Heart left ventricle (tissue), 16 donors: ENCODE measurements at regions of chr17 and their contacts with region 1.

Region 1: DNA sequence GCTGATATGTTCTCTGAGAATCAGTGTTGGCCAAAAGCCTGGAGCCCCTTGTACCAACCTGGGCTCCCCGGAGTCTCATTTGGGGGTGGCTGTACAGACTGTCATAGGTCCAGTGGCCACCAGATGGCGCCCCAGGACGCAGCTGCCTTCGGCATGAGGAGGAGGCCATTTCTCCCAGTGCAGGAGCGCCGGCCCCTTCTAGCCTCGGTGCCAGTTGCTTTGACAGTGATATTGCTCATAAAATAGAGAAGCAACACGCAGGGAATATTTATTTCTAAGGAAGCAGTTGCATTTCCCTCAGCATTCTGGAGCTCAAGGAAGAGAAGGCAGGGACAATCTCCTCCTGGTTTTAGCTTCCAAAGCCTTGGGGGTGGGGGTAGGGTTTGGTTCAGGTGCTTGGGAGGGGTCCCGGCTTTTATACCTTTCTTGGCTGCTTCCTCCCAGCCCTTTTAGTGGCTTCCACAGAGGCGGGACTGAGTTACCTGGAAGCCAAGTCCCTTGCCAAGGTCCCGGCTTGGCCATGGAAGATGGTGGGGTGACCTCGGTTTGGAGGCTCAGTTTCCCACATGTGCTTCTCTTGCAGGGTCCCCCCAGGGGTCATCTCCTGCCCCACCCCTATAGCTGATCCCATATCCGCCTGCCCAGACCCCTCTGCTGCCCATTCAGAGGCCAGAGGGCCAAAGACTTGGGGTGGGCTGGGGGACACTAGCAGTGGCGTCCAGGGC is 117.8 kb upstream of the CDC42EP4 start:
- DNase-seq: peak; percentile 82 to 93 (median 89)
- ATAC-seq: peak; percentile 79 to 94 (median 92)
- H3K4me3 ChIP-seq: no peak overlapping the region
- H3K27ac ChIP-seq: no peak overlapping the region
- H3K4me1 ChIP-seq: peaks cover 0 to 19% (median 4%) of the 10 kb centered on the region in 12 donors
- H3K27me3 ChIP-seq: no peaks in the 10 kb centered on the region
- CTCF ChIP-seq: peak; percentile 92 to 99 (median 97)
- POLR2A ChIP-seq: no peak

Region 2: GRCh38 chr17:73478768-73479424 is 49.3 kb after region 1 on chr17:
- intact Hi-C with region 1: loop called in 2 of 10 experiments (anchors 5 to 10 kb)
- DNase-seq: no peak
- ATAC-seq: no peak
- H3K4me3 ChIP-seq: no peak overlapping the region
- H3K27ac ChIP-seq: no peak overlapping the region
- H3K4me1 ChIP-seq: peaks cover 2 to 37% (median 11%) of the 10 kb centered on the region in 12 donors
- H3K27me3 ChIP-seq: peaks cover 0 to 7% (median 0%) of the 10 kb centered on the region in 9 donors
- CTCF ChIP-seq: no peak
- POLR2A ChIP-seq: no peak

Region 3: GRCh38 chr17:73532421-73532901 is 102.9 kb after region 1 on chr17:
- intact Hi-C with region 1: loop called in 4 of 10 experiments (anchors 2 to 10 kb)
- DNase-seq: peak in 1 of 5 donors; percentile 50
- ATAC-seq: peak in 2 of 4 donors; percentile 11 to 32
- H3K4me3 ChIP-seq: no peak overlapping the region
- H3K27ac ChIP-seq: no peak overlapping the region
- H3K4me1 ChIP-seq: peaks cover 0 to 8% (median 0%) of the 10 kb centered on the region in 12 donors
- H3K27me3 ChIP-seq: no peaks in the 10 kb centered on the region
- CTCF ChIP-seq: no peak
- POLR2A ChIP-seq: no peak

Region 4: GRCh38 chr17:73645050-73645978 is 215.7 kb after region 1 on chr17:
- intact Hi-C with region 1: loop called in 9 of 10 experiments (anchors 1 to 10 kb)
- DNase-seq: peak; percentile 61 to 72 (median 65)
- ATAC-seq: peak; percentile 41 to 87 (median 77)
- H3K4me3 ChIP-seq: peak overlapping the region in 11 of 12 donors; percentile 20 to 68 (median 57)
- H3K27ac ChIP-seq: peak overlapping the region in 4 of 12 donors; percentile 20 to 50 (median 47)
- H3K4me1 ChIP-seq: peaks cover 0 to 30% (median 15%) of the 10 kb centered on the region in 12 donors
- H3K27me3 ChIP-seq: peaks cover 0 to 68% (median 13%) of the 10 kb centered on the region in 9 donors
- CTCF ChIP-seq: peak in 4 of 12 donors; percentile 7 to 35 (median 18)
- POLR2A ChIP-seq: no peak

Region 5: GRCh38 chr17:73841431-73842060 is 411.9 kb after region 1 on chr17:
- intact Hi-C with region 1: loop called in 5 of 10 experiments (anchors 5 to 10 kb)
- DNase-seq: no peak
- ATAC-seq: peak in 3 of 4 donors; percentile 56 to 66 (median 66)
- H3K4me3 ChIP-seq: no peak overlapping the region
- H3K27ac ChIP-seq: no peak overlapping the region
- H3K4me1 ChIP-seq: no peaks in the 10 kb centered on the region
- H3K27me3 ChIP-seq: peaks cover 0 to 12% (median 0%) of the 10 kb centered on the region in 9 donors
- CTCF ChIP-seq: peak; percentile 31 to 68 (median 54)
- POLR2A ChIP-seq: no peak

Region 6: GRCh38 chr17:73956669-73957465 is 527.3 kb after region 1 on chr17:
- intact Hi-C with region 1: loop called in 5 of 10 experiments (anchors 5 to 10 kb)
- DNase-seq: peak in 2 of 5 donors; percentile 20 to 37
- ATAC-seq: peak in 3 of 4 donors; percentile 37 to 57 (median 42)
- H3K4me3 ChIP-seq: no peak overlapping the region
- H3K27ac ChIP-seq: no peak overlapping the region
- H3K4me1 ChIP-seq: peaks cover 0 to 12% (median 9%) of the 10 kb centered on the region in 12 donors
- H3K27me3 ChIP-seq: peaks cover 0 to 21% (median 12%) of the 10 kb centered on the region in 9 donors
- CTCF ChIP-seq: peak; percentile 13 to 54 (median 44)
- POLR2A ChIP-seq: no peak